ENCODE measurements at regions of chr3 and their contacts with region 1.

Region 1: GRCh38 chr3:101849721-101850245 is 469 bp downstream of the NFKBIZ start:
- DNase-seq: peak; percentile 35 to 66
- ATAC-seq: peak; percentile 13

Region 2: DNA sequence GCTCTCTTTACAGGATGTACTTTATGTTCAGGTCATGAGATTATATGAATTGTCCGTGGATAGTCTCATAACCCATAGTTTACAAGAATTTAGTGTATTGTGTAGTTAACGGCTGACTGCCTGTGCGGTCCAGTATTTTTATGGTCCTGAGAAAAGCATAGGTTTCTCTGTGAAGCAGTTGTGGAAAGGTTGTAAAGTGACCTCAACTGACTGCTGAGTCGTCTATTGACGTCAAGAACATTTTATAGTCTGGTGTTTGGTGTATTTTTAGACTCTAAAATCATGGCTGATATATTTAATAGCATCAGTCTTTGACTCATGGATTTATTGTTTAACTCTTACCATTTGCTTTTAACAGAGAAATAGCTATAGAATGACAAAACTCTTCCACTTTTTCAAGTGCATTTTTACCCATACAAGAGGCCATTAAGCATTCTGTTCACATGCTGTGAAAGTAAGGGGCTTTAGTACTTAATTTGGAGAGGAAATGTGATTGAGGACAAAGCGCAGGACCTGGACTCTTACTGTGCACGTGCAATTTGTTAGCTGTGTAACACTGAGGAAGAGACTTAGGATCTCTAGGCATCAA is 240.2 kb after region 1 on chr3:
- intact Hi-C with region 1: loop called in 1 of 2 experiments (anchors 10 kb)
- DNase-seq: peak in 1 of 2 donors; percentile 61
- ATAC-seq: peak; percentile 90

Measured in left colon (tissue), 2 donors.